ENCODE measurements at regions of chr6 and their contacts with region 1.

Region 1: DNA sequence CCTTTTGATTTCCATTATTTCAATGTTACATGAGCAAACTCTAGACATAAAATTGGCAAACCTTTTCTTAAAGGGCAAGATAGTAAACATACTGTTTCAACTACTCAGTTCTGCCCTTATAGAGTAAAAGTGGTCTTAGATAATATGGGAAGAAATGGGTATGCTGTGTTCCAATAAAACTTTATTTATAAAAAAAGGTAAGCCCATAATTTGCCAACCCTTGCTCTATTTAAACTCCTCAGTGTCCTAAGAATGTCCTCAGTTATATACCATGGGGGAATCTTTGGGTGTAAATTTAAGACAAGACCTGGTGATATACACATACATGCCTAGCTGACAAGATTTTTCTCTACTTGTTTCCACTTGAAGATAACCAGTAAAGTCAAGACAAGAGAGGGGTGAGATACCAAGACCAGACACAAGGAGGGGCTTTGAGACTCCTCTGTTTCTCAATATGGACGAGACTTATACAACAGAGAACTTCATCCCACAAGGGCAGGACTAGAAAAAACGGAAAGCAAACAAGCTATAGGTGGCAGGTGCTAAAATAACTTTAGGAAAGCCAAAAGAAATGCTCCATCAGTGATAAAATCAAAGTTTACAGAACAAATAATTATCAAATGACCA is 10.5 kb downstream of the SNX3 start:
- DNase-seq: peak in 1 of 35 experiments; percentile 34
- ATAC-seq: peak in 1 of 4 experiments; percentile 39
- H3K4me3 ChIP-seq: no peak overlapping the region
- H3K4me3 Mint-ChIP-seq: no peak overlapping the region
- H3K27ac ChIP-seq: no peak overlapping the region
- H3K27ac Mint-ChIP-seq: no peak overlapping the region
- H3K4me1 ChIP-seq: peaks cover 8 to 11% of the 10 kb centered on the region in 2 experiments
- H3K4me1 Mint-ChIP-seq: peaks cover 56 to 71% (median 65%) of the 10 kb centered on the region in 3 donors
- H3K27me3 ChIP-seq: no peaks in the 10 kb centered on the region
- H3K27me3 Mint-ChIP-seq: no peaks in the 10 kb centered on the region

Region 2: DNA sequence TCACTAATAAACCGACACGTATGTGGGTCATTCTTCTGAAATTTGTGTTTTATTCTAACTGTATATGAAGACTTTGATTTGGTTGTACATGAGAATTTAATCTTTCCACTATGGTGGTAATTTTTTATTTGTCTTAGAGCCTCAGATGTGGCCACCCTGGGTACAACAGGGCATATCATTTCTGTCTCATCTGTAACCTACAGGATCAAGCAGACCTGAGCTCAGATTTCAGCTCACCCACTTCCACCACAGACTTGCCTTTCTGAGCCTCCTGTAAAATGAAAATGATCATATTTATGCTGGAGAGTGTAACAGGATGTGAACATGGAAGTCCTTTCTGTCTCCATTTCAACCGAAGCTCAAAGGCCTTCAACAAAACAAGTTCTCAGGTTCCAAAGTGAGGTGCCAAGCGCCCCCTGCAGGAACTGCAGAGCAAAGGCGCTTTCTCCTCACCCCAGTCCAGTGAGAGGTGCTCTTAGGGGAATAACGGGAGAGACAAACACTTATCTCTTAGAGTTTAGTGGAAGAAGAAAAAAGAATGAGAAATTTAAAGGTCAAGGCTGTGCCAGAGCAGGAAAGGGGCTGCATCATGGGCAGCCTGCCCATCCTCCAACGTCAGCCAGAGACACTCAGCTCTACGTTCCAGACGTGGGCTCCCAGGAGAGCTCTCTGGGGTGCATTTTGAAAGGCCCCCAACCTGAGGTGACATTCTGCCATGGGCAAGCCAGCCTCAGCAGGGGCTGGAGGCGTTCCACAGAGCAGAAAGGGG is 1252.8 kb before region 1 on chr6:
- CTCF ChIA-PET with region 1: no interaction called
- POLR2A ChIA-PET with region 1: interaction called in 1 of 2 experiments, 10 read pairs
- DNase-seq: peak in 27 of 35 experiments; percentile 8 to 62 (median 28)
- ATAC-seq: no peak
- H3K4me3 ChIP-seq: no peak overlapping the region
- H3K4me3 Mint-ChIP-seq: no peak overlapping the region
- H3K27ac ChIP-seq: no peak overlapping the region
- H3K27ac Mint-ChIP-seq: no peak overlapping the region
- H3K4me1 ChIP-seq: peaks cover 0 to 6% of the 10 kb centered on the region in 2 experiments
- H3K4me1 Mint-ChIP-seq: peaks cover 3 to 8% (median 3%) of the 10 kb centered on the region in 3 donors
- H3K27me3 ChIP-seq: peaks cover 0 to 3% of the 10 kb centered on the region in 2 experiments
- H3K27me3 Mint-ChIP-seq: peaks cover 0 to 1% of the 10 kb centered on the region in 2 donors

Region 3: DNA sequence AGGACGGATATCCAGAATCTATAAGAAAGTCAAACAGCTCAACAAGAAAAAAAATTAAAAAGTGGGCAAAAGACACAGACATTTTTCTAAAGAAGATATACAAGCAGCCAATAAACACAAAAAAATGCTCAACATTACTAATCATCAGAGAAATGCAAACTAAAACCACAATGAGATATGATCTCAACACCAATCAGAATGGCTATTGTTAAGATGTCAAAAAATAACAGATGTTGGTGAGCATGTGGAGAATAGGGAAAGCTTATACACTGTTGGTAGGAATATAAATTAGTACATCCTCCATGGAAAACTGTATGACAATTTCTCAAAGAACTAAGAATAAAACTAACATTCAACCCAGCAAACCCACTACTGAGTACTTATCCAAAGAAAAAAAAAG is 152.5 kb before region 1 on chr6:
- CTCF ChIA-PET with region 1: no interaction called
- POLR2A ChIA-PET with region 1: interaction called in 1 of 2 experiments, 11 read pairs
- DNase-seq: no peak
- ATAC-seq: no peak
- H3K4me3 ChIP-seq: no peak overlapping the region
- H3K4me3 Mint-ChIP-seq: no peak overlapping the region
- H3K27ac ChIP-seq: no peak overlapping the region
- H3K27ac Mint-ChIP-seq: no peak overlapping the region
- H3K4me1 ChIP-seq: no peaks in the 10 kb centered on the region
- H3K4me1 Mint-ChIP-seq: no peaks in the 10 kb centered on the region
- H3K27me3 ChIP-seq: peaks cover 0 to 8% of the 10 kb centered on the region in 2 experiments
- H3K27me3 Mint-ChIP-seq: peaks cover 28 to 31% of the 10 kb centered on the region in 2 donors